A673 (cell line): ENCODE measurements at regions of chr1 and their contacts with region 1.

Region 1: GRCh38 chr1:70354332-70355110 is at the start of gene ANKRD13C:
- DNase-seq: peak; percentile 99
- H3K4me3 ChIP-seq: peak within 1 kb of the TSS; percentile 83
- H3K27ac ChIP-seq: peak within 1 kb of the TSS; percentile 96
- H3K4me1 ChIP-seq: no peaks in the 10 kb centered on the region
- H3K27me3 ChIP-seq: no peaks in the 10 kb centered on the region
- CTCF ChIP-seq: no peak; the same call in 1 of the 2 replicates
- total RNA-seq, gene ANKRD13C: 20.6 and 21.8 TPM in 2 replicates

Region 2: DNA sequence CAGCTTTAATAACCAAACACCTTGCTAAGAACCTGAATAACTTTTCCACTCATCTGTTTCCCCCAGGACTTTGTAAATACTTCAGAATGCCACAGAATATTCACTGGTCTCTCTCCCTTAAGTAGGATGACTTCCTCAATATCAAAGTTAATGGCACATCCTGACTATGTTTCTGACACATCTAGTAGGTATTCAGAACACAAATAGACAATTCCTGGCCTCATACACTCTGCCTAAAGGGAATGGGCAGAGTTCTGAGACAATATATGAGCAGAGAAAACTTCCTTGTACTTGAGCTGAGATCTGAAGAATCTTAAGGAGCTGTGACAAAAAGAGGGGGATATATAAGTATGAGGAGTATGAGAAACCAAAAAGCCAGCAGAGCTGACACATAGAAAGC is 34.8 kb before region 1 on chr1:
- CTCF ChIA-PET with region 1: no interaction called
- POLR2A ChIA-PET with region 1: interaction called, 4 read pairs
- intact Hi-C with region 1: loop called (anchors 5 kb)
- DNase-seq: no peak
- H3K4me3 ChIP-seq: no peak overlapping the region
- H3K27ac ChIP-seq: no peak overlapping the region
- H3K4me1 ChIP-seq: peaks cover 3% of the 10 kb centered on the region
- H3K27me3 ChIP-seq: no peaks in the 10 kb centered on the region
- CTCF ChIP-seq: no peak

Region 3: DNA sequence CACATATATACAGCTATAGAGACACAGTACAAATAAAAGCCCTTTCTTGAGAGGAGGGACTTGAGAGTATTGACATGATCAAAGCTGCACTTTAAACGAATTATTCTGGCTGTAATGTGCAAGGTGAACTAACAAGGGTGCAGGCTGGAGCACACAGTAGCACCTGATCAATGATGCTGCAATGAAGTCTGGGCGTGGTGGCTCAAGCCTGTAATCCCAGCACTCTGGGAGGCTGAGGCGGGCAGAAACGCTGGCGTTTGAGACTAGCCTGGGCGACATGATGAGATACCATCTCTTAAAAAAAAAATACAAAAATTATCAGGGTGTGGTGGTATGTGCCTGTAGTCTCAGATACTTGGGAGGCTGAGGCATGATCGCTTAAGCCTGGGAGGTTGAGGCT is 42.5 kb after region 1 on chr1:
- CTCF ChIA-PET with region 1: no interaction called
- POLR2A ChIA-PET with region 1: interaction called, 12 read pairs
- intact Hi-C with region 1: no loop called
- DNase-seq: no peak
- H3K4me3 ChIP-seq: no peak overlapping the region
- H3K27ac ChIP-seq: no peak overlapping the region
- H3K4me1 ChIP-seq: no peaks in the 10 kb centered on the region
- H3K27me3 ChIP-seq: no peaks in the 10 kb centered on the region
- CTCF ChIP-seq: no peak

Region 4: DNA sequence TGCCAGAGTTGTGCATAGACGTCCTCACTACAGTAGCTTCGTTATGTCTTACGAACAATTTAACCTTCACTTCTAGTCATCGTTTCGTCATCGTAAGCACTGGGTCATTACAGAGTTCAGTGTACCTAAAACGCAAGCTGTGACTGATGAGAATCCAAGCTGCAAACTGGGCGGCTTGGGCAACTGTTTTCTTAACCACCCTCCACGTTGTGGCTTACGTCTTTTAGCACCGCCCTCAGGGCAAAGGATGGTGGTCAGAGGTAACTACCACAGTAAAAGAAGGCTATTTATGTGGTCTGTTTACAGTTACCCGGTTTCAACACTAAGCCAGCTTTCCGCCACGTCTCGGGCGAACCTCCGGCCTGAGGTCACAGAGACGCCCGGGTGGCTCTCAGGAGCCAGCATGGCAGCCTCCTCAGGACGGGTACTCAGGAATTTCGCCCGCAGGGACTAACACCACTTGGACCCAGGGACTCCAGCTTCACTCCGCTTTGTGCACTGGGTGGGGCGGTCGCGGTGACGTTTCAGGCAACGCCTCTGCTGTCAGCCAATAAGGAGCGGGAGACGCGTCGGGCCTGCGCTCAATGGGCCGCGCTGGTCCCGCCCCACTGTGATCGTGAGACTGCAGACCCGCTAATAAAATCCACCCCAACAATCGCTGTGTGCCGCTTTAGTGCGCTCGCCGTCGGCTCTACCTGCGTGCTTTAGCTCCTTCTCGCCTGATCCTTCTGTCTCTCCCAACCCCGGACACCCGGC is 56.3 kb after region 1 on chr1 and contains the start of gene CTH:
- CTCF ChIA-PET with region 1: no interaction called
- POLR2A ChIA-PET with region 1: interaction called, 9 read pairs
- intact Hi-C with region 1: loop called (anchors 2 kb)
- DNase-seq: peak; percentile 98
- H3K4me3 ChIP-seq: peak within 1 kb of the TSS; percentile 69
- H3K27ac ChIP-seq: peak within 1 kb of the TSS; percentile 91
- H3K4me1 ChIP-seq: peaks cover 8% of the 10 kb centered on the region
- H3K27me3 ChIP-seq: no peaks in the 10 kb centered on the region
- CTCF ChIP-seq: no peak
- total RNA-seq, gene CTH: 23.5 and 32.6 TPM in 2 replicates